ENCODE measurements at regions of chr2 and their contacts with region 1.

Region 1: DNA sequence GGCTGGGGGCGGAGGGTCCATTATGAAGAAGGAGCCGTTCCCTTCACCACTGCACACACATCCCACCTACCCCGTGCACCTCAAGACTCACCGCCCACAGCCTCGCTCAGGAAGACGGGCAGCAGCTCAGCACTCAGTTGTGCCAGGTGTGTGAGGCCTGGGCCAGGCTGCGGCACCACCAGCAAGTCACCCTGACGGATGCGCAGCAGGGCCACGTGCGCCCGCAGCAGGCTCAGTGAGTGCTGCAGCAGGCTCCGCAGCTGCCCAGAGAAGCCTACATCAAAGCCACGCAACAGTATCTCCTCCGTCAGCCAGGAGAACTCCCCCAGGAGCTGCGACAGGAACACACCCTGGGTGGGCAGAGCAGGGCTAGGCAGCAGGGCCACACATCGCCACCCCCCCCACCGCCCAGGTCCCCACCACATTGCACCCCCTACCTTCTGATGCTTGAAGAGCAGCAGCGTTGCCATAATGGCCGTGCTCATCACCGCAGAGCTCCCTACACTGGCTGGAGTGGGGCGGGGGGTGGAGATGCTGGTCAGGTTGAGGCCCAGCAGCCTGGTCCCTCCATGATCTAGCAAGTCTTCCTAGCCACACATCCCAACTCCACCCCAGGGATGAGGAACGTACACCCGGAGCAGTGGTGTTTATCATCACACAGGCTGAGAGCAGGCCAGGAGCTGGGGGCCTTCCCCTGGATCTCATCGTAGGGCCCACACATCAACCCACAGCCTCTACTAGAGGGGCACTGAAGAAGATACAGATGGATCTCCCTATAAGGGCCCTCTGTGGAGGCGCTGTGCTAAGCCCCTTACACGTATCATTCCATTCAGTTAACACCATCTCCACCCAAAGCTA is 10.2 kb downstream of the GPAT2 start:
- DNase-seq: no peak
- CTCF ChIP-seq: no peak

Region 2: GRCh38 chr2:96116879-96117697 is 92.5 kb after region 1 on chr2:
- in situ Hi-C with region 1: loop called (anchors 25 kb)
- DNase-seq: peak; percentile 94
- CTCF ChIP-seq: peak; percentile 87

Region 3: GRCh38 chr2:96265840-96266679 is 241.5 kb after region 1 on chr2 and contains the starts of genes CIAO1 and TMEM127:
- in situ Hi-C with region 1: loop called (anchors 25 kb)
- DNase-seq: peak; percentile 99
- CTCF ChIP-seq: no peak

Region 4: DNA sequence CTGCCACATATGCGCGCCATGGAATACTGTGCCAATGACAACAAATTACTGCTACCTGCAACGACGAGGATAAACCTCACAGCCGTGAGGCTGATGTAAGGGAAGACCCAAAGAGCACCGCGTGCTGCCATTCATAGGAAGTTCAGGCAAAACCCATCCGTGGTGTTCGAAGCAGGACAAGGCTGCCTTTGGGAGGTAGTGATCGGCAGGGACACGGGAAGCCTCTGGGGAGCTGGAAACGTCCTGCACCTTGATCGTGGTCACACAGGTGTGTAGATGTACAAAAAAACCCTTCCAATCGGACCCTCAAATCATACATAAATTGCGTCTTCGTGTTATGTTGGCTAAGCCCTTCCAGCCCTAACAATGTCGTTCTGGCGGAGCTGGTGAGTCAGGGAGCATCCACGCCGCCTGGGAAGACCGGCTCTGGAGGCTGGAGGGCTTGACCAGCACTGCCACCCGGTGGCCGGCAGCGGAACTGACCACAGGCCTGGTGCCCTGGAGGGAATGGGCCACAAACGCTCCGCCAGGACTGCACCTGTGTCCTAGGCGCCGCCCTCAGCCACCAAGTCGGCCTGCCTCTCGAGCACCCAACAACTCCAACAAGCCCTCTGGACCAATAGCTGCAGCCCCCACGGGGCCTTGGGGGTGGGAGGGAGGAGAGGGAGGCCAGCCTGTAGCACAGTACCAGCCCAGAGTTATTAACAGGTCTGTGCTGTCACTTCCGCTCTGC is 484.7 kb after region 1 on chr2:
- in situ Hi-C with region 1: loop called (anchors 25 kb)
- DNase-seq: peak; percentile 89
- CTCF ChIP-seq: peak; percentile 99

Measured in GM13976 (cell line).